ENCODE measurements at regions of chr15 and their contacts with region 1.

Region 1: DNA sequence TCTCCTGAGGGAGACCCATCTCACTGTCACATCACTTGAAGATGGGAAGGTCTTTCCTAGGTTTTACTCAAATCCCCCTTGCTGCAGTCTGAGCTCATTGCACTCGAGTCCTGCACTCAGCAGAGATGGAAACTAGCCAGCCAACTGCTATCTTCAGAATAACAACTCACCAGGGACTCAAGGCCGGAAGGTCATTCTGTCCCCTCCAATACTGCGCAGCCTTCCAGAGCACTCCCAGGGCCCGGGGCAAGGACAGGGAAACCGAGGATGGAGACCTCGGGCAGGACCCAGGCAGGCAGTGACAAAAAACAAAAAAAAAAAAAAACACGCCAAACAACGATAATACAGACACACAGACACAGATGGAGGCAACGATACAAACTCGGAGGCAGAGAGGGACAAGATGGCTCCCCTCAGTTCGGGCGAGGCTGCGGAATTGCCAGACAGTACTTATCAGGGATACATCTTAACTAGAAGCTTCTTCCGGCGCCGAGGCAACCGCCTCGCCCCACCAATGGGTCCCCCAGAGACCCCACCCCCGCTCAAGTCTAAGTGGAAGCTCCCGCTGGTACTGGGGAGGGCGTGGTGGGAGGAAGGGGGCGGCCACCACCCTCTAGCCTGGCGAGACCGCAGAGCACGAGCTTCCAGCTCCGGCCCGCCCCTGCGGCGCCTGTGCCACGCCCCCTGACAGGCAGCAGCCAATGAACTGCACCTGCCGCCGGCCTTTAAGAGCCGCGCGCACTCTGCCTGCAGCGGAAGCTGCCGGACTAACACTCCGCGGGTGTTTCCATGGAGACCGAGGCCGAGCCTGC is 7.0 kb upstream of the MAP1A start:
- DNase-seq: peak; percentile 92

Region 2: GRCh38 chr15:43440721-43441281 is 69.6 kb before region 1 on chr15:
- CTCF ChIA-PET with region 1: interaction called, 7 read pairs
- POLR2A ChIA-PET with region 1: interaction called, 12 read pairs
- DNase-seq: peak; percentile 6

Region 3: GRCh38 chr15:43492673-43493601 is 17.5 kb before region 1 on chr15 and contains the start of gene TP53BP1:
- CTCF ChIA-PET with region 1: interaction called, 7 read pairs
- POLR2A ChIA-PET with region 1: interaction called, 33 read pairs
- DNase-seq: peak; percentile 85

Region 4: DNA sequence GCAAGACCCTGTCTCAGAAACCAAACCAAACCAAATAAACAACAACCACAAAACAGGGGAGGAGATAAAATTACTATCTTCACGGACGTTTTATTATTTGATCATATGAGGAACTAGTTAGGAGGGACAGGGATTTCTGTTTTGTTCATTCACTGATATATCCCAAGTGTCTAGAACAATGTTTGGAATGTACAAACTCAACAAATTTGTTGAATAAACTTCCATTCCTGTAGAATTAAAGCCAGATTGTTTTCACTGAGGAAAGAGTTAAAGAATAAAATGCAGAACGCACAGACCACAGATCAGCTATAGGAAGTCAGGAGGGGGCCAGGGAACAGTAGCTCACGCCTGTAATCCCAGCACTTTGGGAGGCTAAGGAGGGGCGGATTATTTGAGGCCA is 114.7 kb after region 1 on chr15:
- CTCF ChIA-PET with region 1: no interaction called
- POLR2A ChIA-PET with region 1: no interaction called
- DNase-seq: no peak

Measured in HEK293T (cell line).